ENCODE measurements at regions of chr14 and their contacts with region 1.

Region 1: GRCh38 chr14:33879684-33880286 is 71.1 kb downstream of the EGLN3 start:
- DNase-seq: no peak
- H3K4me3 Mint-ChIP-seq: no peak overlapping the region
- H3K27ac Mint-ChIP-seq: no peak overlapping the region
- H3K4me1 Mint-ChIP-seq: peaks cover 15% of the 10 kb centered on the region
- H3K27me3 Mint-ChIP-seq: peaks cover 6% of the 10 kb centered on the region

Region 2: DNA sequence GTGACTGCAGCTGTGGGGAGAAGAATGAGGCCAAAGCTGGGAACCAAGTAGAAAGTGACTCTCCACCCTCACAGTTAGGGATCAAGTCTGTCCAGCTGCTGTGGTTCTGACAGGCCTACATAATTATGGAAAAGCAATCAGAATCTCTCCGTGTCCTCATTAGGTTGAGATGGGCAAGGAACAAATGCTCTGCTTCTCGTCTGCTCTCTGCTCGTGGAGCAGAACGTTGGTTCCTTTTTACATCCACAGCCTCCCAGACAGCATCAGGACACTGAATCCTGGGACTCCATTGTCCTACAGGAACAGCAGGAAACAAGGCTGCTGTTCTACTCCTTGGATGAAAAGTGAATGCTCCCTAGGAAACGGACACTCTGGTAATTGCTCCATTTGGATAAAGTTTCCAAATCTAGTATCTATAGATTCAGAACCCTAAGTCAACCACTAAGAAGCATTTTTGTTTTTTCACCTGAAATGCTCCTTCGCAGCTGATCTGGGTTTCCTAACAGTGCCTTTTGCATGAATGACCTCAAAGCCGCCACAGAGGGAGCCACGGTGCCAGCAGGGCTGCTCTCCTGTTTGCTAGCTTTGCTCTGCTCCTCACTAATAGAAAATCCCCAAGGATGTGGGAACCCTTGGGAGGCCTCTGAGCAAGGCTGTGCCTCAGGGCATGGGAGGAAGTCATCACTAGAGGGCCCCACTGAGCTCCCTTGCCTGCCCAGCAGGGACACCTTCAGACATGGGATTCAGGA is 30.9 kb before region 1 on chr14:
- intact Hi-C with region 1: loop called (anchors 5 kb)
- DNase-seq: no peak
- H3K4me3 Mint-ChIP-seq: no peak overlapping the region
- H3K27ac Mint-ChIP-seq: no peak overlapping the region
- H3K4me1 Mint-ChIP-seq: peaks cover 18% of the 10 kb centered on the region
- H3K27me3 Mint-ChIP-seq: peaks cover 24% of the 10 kb centered on the region

Measured in activated T-helper 2 cell treated with anti-CD3 and anti-CD28 coated beads, Interferon-gamma antibody, Interleukin-2, Interleukin-4, amounts not matched to agents 10 μg/mL and 5 μg/mL and 100 μg/mL, durations not matched to agents 14 hours and 24 hours and 36 hours (primary cell).